ENCODE measurements at regions of chr10 and their contacts with region 1.

Region 1: GRCh38 chr10:34637418-34637911 is 177.6 kb downstream of the PARD3 start:
- DNase-seq: peak; percentile 20 to 70 (median 53)
- ATAC-seq: peak; percentile 77
- H3K4me3 ChIP-seq: no peak overlapping the region
- H3K4me3 Mint-ChIP-seq: peak overlapping the region in 8 of 10 donors; percentile 0 to 46 (median 18)
- H3K27ac ChIP-seq: no peak overlapping the region
- H3K27ac Mint-ChIP-seq: peak overlapping the region in 1 of 9 donors; percentile 56
- H3K4me1 ChIP-seq: no peaks in the 10 kb centered on the region
- H3K4me1 Mint-ChIP-seq: peaks cover 7 to 18% (median 13%) of the 10 kb centered on the region in 7 donors
- H3K27me3 ChIP-seq: no peaks in the 10 kb centered on the region
- H3K27me3 Mint-ChIP-seq: peaks cover 0 to 13% (median 9%) of the 10 kb centered on the region in 5 donors

Region 2: GRCh38 chr10:34522546-34522945 is 114.9 kb before region 1 on chr10:
- CTCF ChIA-PET with region 1: no interaction called
- POLR2A ChIA-PET with region 1: no interaction called
- intact Hi-C with region 1: loop called (anchors 1 kb)
- DNase-seq: peak in 1 of 9 donors; percentile 7
- ATAC-seq: peak; percentile 50
- H3K4me3 ChIP-seq: no peak overlapping the region
- H3K4me3 Mint-ChIP-seq: peak overlapping the region in 8 of 10 donors; percentile 1 to 66 (median 23)
- H3K27ac ChIP-seq: no peak overlapping the region
- H3K27ac Mint-ChIP-seq: no peak overlapping the region
- H3K4me1 ChIP-seq: no peaks in the 10 kb centered on the region
- H3K4me1 Mint-ChIP-seq: peaks cover 0 to 8% (median 0%) of the 10 kb centered on the region in 7 donors
- H3K27me3 ChIP-seq: no peaks in the 10 kb centered on the region
- H3K27me3 Mint-ChIP-seq: peaks cover 0 to 12% (median 3%) of the 10 kb centered on the region in 5 donors

Region 3: DNA sequence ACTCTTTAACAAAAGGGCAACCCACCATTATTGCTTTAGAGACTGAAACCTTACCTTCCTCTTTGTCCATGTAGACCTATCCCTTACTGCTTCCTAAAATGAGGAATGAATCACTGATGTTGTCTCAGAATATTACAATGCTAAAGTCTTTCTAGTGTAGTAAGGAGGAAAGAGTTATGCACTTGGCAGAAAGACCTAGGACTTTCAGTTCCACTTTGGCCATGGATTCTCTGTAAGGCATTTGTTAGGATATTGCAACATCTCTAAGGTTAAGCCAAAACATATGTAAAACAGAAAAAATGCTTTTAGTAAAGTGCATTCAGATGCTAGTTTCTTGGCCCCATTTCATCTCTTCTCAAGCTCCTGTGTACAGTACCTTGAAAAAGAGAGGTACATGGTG is 53.3 kb before region 1 on chr10:
- CTCF ChIA-PET with region 1: no interaction called
- POLR2A ChIA-PET with region 1: no interaction called
- intact Hi-C with region 1: no loop called
- DNase-seq: no peak
- ATAC-seq: no peak
- H3K4me3 ChIP-seq: no peak overlapping the region
- H3K4me3 Mint-ChIP-seq: no peak overlapping the region
- H3K27ac ChIP-seq: no peak overlapping the region
- H3K27ac Mint-ChIP-seq: no peak overlapping the region
- H3K4me1 ChIP-seq: no peaks in the 10 kb centered on the region
- H3K4me1 Mint-ChIP-seq: no peaks in the 10 kb centered on the region
- H3K27me3 ChIP-seq: no peaks in the 10 kb centered on the region
- H3K27me3 Mint-ChIP-seq: peaks cover 0 to 11% (median 4%) of the 10 kb centered on the region in 5 donors

Region 4: DNA sequence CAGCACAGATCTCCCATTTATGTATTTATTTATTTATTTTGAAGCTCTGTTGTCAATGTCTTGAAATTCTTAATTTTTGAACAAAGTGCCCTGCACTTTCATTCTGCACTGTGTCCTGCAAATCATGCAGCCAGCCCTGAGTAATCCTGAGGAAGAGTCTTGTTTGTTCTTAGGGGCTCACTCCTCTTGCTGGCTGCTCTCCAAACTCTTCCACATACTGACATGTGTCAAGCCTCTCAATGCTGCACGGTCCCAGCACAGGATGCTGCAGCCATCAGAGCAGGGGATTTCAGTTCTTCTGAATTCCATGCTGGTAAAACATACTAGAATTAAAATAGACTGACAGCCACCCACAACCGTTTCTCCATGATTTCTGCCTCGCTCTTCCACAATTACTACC is 29.6 kb before region 1 on chr10:
- CTCF ChIA-PET with region 1: no interaction called
- POLR2A ChIA-PET with region 1: no interaction called
- intact Hi-C with region 1: no loop called
- DNase-seq: no peak
- ATAC-seq: no peak
- H3K4me3 ChIP-seq: no peak overlapping the region
- H3K4me3 Mint-ChIP-seq: no peak overlapping the region
- H3K27ac ChIP-seq: no peak overlapping the region
- H3K27ac Mint-ChIP-seq: no peak overlapping the region
- H3K4me1 ChIP-seq: no peaks in the 10 kb centered on the region
- H3K4me1 Mint-ChIP-seq: no peaks in the 10 kb centered on the region
- H3K27me3 ChIP-seq: no peaks in the 10 kb centered on the region
- H3K27me3 Mint-ChIP-seq: peaks cover 0 to 5% (median 4%) of the 10 kb centered on the region in 5 donors

Region 5: DNA sequence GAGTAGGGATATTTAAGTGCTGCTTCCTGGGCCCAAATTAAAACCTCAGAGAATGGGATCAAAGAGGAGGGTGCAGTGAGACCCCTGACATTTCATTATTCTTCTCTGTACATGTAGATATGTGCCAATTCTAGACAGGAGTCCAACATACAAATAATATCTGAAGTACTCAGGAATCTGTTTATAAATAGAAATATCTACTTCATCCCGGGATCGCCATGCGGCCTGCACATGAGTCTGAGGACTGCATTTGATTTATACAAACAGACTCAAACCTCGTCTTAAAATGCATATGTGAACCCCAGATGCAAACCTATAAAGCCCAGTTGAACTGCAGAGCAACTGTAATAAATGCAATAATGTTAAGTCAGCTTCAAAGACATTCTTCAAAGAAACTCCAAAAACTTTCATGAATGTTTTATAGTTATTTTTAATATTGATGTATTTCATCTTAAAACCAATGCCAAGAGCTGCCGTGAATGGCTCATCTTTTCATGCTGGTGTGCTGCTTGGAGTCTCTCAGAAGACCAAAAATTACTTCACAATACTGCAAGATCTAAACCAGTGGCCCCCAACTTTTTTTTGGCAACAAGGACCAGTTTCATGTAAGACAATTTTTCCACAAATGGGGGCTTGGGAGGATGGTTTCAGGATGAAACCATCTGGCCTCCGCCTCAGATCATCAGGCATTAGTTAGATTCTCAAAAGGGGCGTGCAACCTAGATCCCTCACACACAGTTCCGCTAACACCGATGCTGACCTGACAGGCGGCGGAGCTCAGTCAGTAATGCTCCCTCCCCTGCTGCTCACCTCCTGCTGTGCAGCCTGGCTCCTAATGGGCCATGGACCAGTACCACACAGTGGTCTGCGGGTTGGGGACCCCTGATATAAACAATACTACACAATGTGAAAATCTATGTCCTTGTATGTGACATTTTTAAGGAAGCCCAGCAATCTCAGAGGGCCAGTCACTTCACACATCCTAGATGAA is 10.7 kb after region 1 on chr10:
- CTCF ChIA-PET with region 1: interaction called, 12 read pairs
- POLR2A ChIA-PET with region 1: no interaction called
- intact Hi-C with region 1: no loop called
- DNase-seq: no peak
- ATAC-seq: no peak
- H3K4me3 ChIP-seq: no peak overlapping the region
- H3K4me3 Mint-ChIP-seq: no peak overlapping the region
- H3K27ac ChIP-seq: no peak overlapping the region
- H3K27ac Mint-ChIP-seq: no peak overlapping the region
- H3K4me1 ChIP-seq: no peaks in the 10 kb centered on the region
- H3K4me1 Mint-ChIP-seq: peaks cover 0 to 2% (median 0%) of the 10 kb centered on the region in 7 donors
- H3K27me3 ChIP-seq: no peaks in the 10 kb centered on the region
- H3K27me3 Mint-ChIP-seq: peaks cover 0 to 12% (median 2%) of the 10 kb centered on the region in 5 donors

Region 6: GRCh38 chr10:35493196-35494118 is 856.0 kb after region 1 on chr10:
- CTCF ChIA-PET with region 1: no interaction called
- POLR2A ChIA-PET with region 1: no interaction called
- intact Hi-C with region 1: no loop called
- DNase-seq: no peak
- ATAC-seq: no peak
- H3K4me3 ChIP-seq: no peak overlapping the region
- H3K4me3 Mint-ChIP-seq: peak overlapping the region in 2 of 10 donors; percentile 30 to 42
- H3K27ac ChIP-seq: no peak overlapping the region
- H3K27ac Mint-ChIP-seq: peak overlapping the region in 4 of 9 donors; percentile 27 to 68 (median 46)
- H3K4me1 ChIP-seq: peaks cover 0 to 7% of the 10 kb centered on the region in 2 donors
- H3K4me1 Mint-ChIP-seq: peaks cover 24 to 81% (median 71%) of the 10 kb centered on the region in 7 donors
- H3K27me3 ChIP-seq: no peaks in the 10 kb centered on the region
- H3K27me3 Mint-ChIP-seq: no peaks in the 10 kb centered on the region

Measured in naive thymus-derived CD4-positive, alpha-beta T cell (primary cell).